ENCODE measurements at regions of chr12 and their contacts with region 1.

Region 1: DNA sequence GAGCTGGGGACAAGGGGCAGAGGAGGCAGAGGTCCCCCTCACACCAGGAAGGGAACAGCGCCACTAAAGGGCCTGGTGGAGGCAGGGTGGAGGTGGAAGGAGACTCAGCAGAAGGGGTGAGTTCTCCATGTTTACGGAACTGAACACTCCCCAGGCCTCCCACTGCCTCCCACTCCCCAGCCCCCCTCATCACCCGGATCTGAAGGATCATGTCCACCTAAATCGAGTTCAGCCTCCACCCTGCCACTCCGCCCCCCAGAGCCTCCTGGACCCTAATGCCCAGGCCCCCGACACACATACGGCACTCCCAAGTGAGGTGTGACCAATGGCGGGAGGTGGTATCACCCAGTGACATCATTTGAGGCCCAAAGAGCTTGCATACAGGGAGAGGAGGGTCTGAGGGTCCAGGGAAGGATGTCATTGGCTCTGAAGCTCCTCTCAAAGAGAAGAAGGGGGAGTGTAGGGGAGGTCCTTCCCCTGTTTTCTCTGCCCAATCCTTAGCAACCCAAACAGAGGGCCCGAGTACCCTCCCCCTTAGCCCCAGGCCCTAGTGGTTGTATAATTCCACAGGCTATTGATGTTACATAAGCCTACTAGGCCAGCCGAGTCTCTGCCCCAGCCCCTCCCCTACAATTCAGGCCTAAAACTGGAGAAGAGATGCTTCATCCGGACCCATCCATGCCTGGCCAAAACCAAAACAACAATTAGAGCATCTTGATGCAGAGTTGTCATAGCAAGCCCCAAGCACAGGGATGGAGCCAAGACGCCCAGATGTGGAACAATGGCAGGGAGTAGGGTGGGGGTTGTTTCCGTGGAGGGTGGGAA is 962 bp downstream of the FAIM2 start:
- DNase-seq: no peak
- H3K4me3 ChIP-seq: no peak overlapping the region
- H3K27ac ChIP-seq: no peak overlapping the region
- H3K4me1 ChIP-seq: peaks cover 0 to 9% (median 1%) of the 10 kb centered on the region in 4 experiments; a peak in 5 of 7 replicates
- H3K27me3 ChIP-seq: peaks cover 0 to 19% (median 16%) of the 10 kb centered on the region in 4 experiments; a peak in 5 of 7 replicates
- CTCF ChIP-seq: peak; percentile 35 to 59 (median 57)
- EP300 ChIP-seq: no peak
- POLR2A ChIP-seq: no peak
- RAD21 ChIP-seq: peak; percentile 14 to 43; a peak in 2 of 4 replicates

Region 2: DNA sequence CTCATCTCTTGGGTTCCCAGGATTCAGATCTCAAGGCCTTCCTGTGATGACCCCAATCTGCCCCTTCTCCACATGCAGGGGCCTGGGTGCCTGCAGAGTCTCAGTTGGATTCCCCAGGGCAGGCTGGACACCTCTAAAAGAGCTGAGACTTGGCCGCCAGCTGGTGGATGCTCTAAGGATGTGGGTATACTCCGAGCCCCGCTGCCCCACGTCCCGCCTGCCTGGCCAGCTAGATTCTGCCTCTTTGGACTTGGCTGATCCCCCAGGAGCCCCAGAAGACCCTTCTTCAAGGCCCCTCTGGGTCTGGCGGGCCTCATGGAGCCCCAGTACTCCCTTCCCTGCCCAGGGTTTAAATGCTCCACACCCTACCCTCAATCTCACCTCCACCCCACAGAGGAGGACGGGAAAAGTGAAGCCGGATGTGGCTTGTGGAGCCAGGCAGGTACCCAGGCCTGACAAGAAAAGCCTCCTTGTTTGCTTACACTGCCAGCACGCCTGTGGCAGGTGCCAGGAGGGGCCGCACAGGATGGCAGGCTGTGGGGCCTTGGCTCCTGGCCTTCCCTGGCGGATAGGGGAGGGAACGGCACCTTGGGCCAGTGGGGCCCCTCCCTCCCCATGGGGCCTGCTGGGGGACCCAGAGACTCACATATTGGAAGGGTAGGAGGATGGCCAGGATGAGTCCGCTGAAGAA is 14.1 kb before region 1 on chr12:
- CTCF ChIA-PET with region 1: interaction called, 16 read pairs
- POLR2A ChIA-PET with region 1: interaction called, 8 read pairs
- DNase-seq: no peak
- H3K4me3 ChIP-seq: no peak overlapping the region
- H3K27ac ChIP-seq: no peak overlapping the region
- H3K4me1 ChIP-seq: peaks cover 0 to 16% (median 6%) of the 10 kb centered on the region in 4 experiments; a peak in 6 of 7 replicates
- H3K27me3 ChIP-seq: no peaks in the 10 kb centered on the region
- CTCF ChIP-seq: no peak
- EP300 ChIP-seq: no peak
- POLR2A ChIP-seq: no peak
- RAD21 ChIP-seq: no peak